H1 (cell line): ENCODE measurements at regions of chr17 and their contacts with region 1.

Region 1: GRCh38 chr17:49910094-49910857 is 58.7 kb upstream of the DLX4 start:
- DNase-seq: peak in 1 of 2 experiments; percentile 82
- H3K4me3 ChIP-seq: peak overlapping the region; percentile 42 to 69 (median 60)
- H3K27ac ChIP-seq: no peak overlapping the region
- H3K4me1 ChIP-seq: peaks cover 1 to 24% (median 17%) of the 10 kb centered on the region in 4 experiments
- H3K27me3 ChIP-seq: peaks cover 12 to 72% (median 66%) of the 10 kb centered on the region in 4 experiments
- CTCF ChIP-seq: no peak
- EP300 ChIP-seq: no peak
- POLR2A ChIP-seq: no peak
- RAD21 ChIP-seq: no peak

Region 2: DNA sequence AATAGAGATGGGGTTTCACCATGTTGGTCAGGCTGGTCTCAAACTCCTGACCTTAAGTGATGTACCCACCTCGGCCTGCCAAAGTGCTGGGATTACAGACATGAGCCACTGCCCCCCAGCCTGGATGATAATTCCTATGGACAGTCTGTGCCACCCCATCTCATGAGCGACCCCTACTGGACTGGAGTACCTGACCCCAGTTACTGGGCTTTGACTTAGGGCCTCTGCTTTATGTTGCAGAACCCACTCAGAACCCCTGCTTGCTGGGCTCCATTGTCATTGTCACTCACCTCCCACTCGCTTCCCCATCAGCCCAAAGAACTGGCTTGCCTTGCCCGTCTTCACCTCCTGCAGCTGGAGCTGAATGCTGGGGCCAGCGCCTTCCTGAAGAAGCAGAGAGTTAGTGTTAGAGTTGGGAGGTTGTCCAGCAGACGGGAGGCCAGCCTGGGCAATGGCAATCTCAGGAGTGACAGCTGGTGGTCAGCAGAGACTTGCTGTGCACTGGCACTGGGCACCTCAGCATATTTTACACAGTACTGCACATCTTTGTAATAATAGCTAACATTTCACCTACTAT is 66.4 kb before region 1 on chr17:
- CTCF ChIA-PET with region 1: no interaction called
- POLR2A ChIA-PET with region 1: no interaction called
- DNase-seq: peak in 1 of 2 experiments; percentile 82
- H3K4me3 ChIP-seq: no peak overlapping the region
- H3K27ac ChIP-seq: no peak overlapping the region
- H3K4me1 ChIP-seq: 0 out of 7 replicates have a peak, but pooled peaks cover 0 to 2% (median 0%) of the 10 kb centered on the region in 4 experiments
- H3K27me3 ChIP-seq: no peaks in the 10 kb centered on the region
- CTCF ChIP-seq: peak; percentile 72 to 80 (median 77)
- EP300 ChIP-seq: no peak
- POLR2A ChIP-seq: no peak
- RAD21 ChIP-seq: peak; percentile 64 to 73

Region 3: GRCh38 chr17:49880291-49881053 is 29.8 kb before region 1 on chr17:
- CTCF ChIA-PET with region 1: interaction called, 16 read pairs
- POLR2A ChIA-PET with region 1: interaction called, 6 read pairs
- DNase-seq: peak; percentile 85 to 95
- H3K4me3 ChIP-seq: peak overlapping the region; percentile 17 to 61 (median 44); a peak in 6 of 8 replicates
- H3K27ac ChIP-seq: no peak overlapping the region
- H3K4me1 ChIP-seq: peaks cover 3 to 15% (median 9%) of the 10 kb centered on the region in 4 experiments
- H3K27me3 ChIP-seq: peaks cover 0 to 4% (median 1%) of the 10 kb centered on the region in 4 experiments; a peak in 5 of 7 replicates
- CTCF ChIP-seq: peak; percentile 89 to 96 (median 91)
- EP300 ChIP-seq: 0 out of 3 replicates have a peak, but pooled peaks of 1 of the 2 experiments have one; percentile 36
- POLR2A ChIP-seq: no peak
- RAD21 ChIP-seq: peak; percentile 92 to 93

Region 4: GRCh38 chr17:49899191-49899485 is 11.1 kb before region 1 on chr17:
- CTCF ChIA-PET with region 1: interaction called, 37 read pairs
- POLR2A ChIA-PET with region 1: interaction called, 7 read pairs
- DNase-seq: peak in 1 of 2 experiments; percentile 70
- H3K4me3 ChIP-seq: no peak overlapping the region
- H3K27ac ChIP-seq: no peak overlapping the region
- H3K4me1 ChIP-seq: peaks cover 4 to 19% (median 14%) of the 10 kb centered on the region in 4 experiments
- H3K27me3 ChIP-seq: peaks cover 5 to 33% (median 32%) of the 10 kb centered on the region in 4 experiments
- CTCF ChIP-seq: peak; percentile 39 to 80 (median 64)
- EP300 ChIP-seq: no peak
- POLR2A ChIP-seq: no peak
- RAD21 ChIP-seq: peak; percentile 63 to 79

Region 5: GRCh38 chr17:49935526-49936210 is 25.4 kb after region 1 on chr17:
- CTCF ChIA-PET with region 1: interaction called, 37 read pairs
- POLR2A ChIA-PET with region 1: interaction called, 3 read pairs
- DNase-seq: no peak
- H3K4me3 ChIP-seq: no peak overlapping the region
- H3K27ac ChIP-seq: no peak overlapping the region
- H3K4me1 ChIP-seq: peaks cover 0 to 10% (median 0%) of the 10 kb centered on the region in 4 experiments; a peak in 5 of 7 replicates
- H3K27me3 ChIP-seq: no peaks in the 10 kb centered on the region
- CTCF ChIP-seq: no peak
- EP300 ChIP-seq: no peak
- POLR2A ChIP-seq: no peak
- RAD21 ChIP-seq: no peak

Region 6: GRCh38 chr17:49969134-49969759 is 59.0 kb after region 1 on chr17 and contains the start of gene DLX4:
- CTCF ChIA-PET with region 1: interaction called, 10 read pairs
- POLR2A ChIA-PET with region 1: interaction called, 6 read pairs
- DNase-seq: peak in 1 of 2 experiments; percentile 81
- H3K4me3 ChIP-seq: peak within 1 kb of the TSS; percentile 53 to 78 (median 62)
- H3K27ac ChIP-seq: no peak within 1 kb of the TSS
- H3K4me1 ChIP-seq: peaks cover 0 to 38% (median 25%) of the 10 kb centered on the region in 4 experiments; a peak in 6 of 7 replicates
- H3K27me3 ChIP-seq: peaks cover 91 to 100% (median 96%) of the 10 kb centered on the region in 4 experiments
- CTCF ChIP-seq: no peak
- EP300 ChIP-seq: no peak
- POLR2A ChIP-seq: no peak
- RAD21 ChIP-seq: no peak
- total RNA-seq, gene DLX4: 0.80 and 0.88 TPM in 2 replicates

Region 7: DNA sequence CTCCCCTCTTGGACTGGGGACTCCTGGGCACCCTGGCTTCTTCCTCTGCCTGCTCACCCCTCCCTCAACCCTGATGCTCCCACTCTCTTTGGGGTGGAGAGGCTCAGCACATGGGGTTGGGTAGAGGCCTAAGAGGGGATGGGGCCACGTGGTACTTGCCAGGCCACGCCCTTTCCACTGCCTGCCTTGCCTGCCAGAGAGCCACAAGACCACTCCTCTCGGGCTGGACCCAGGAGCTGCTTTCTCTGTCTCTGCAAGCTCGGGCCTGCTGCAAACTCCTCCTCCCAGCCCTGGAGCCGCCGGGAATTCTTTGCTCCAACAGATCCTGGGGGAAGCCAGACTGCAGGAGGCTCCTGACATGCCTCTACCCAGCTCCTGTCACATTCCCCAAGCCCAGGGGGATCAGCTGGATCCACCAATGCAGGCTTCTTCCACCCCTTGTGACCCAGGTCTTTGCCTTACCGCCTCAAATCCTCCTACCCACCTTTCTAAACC is 70.5 kb after region 1 on chr17:
- CTCF ChIA-PET with region 1: interaction called, 13 read pairs
- POLR2A ChIA-PET with region 1: no interaction called
- DNase-seq: peak; percentile 64 to 72
- H3K4me3 ChIP-seq: no peak overlapping the region
- H3K27ac ChIP-seq: no peak overlapping the region
- H3K4me1 ChIP-seq: peaks cover 3 to 25% (median 14%) of the 10 kb centered on the region in 4 experiments
- H3K27me3 ChIP-seq: peaks cover 1 to 37% (median 18%) of the 10 kb centered on the region in 4 experiments
- CTCF ChIP-seq: no peak
- EP300 ChIP-seq: no peak
- POLR2A ChIP-seq: no peak
- RAD21 ChIP-seq: 0 out of 4 replicates have a peak, but pooled peaks of 1 of the 2 experiments have one; percentile 13